ENCODE measurements at regions of chr6 and their contacts with region 1.

Region 1: GRCh38 chr6:32984605-32985389 is 16.4 kb downstream of the BRD2 start:
- DNase-seq: peak; percentile 96
- H3K4me3 ChIP-seq: no peak overlapping the region
- H3K27ac ChIP-seq: peak overlapping the region in 6 of 8 donors; percentile 17 to 65 (median 35)
- H3K4me1 ChIP-seq: peaks cover 0 to 54% (median 35%) of the 10 kb centered on the region in 6 donors
- H3K27me3 ChIP-seq: no peaks in the 10 kb centered on the region
- CTCF ChIP-seq: peak; percentile 63 to 95 (median 84)
- POLR2A ChIP-seq: no peak

Region 2: DNA sequence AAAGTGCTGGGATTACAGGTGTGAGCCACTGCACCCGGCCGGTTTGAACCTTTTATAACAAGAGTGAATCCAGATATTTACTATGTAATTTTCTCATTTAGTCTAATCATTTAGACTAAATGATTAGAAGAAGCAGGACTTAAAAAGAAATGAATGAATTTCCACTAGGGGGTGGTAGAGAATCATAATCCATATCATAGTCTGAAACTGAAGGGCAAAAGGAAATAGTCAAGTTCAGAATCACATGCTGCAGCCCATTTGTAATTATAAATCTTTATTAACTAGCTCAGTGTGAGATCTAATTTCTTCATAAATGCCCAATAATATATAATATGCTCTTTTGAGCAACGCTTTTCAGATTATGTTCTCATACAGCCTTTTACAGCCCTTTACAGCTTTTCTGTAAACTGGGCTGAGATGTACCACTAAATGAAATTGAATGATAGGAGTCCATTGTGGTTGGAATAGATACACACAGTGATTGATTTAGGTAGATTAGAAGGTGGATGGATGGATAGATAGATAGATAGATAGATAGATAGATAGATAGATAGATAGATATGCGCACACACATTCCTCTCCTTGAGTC is 99.0 kb before region 1 on chr6:
- intact Hi-C with region 1: loop called (anchors 2 kb)
- DNase-seq: no peak
- H3K4me3 ChIP-seq: no peak overlapping the region
- H3K27ac ChIP-seq: peak overlapping the region in 1 of 8 donors; percentile 28
- H3K4me1 ChIP-seq: peaks cover 0 to 29% (median 17%) of the 10 kb centered on the region in 6 donors
- H3K27me3 ChIP-seq: no peaks in the 10 kb centered on the region
- CTCF ChIP-seq: peak; percentile 39 to 81 (median 65)
- POLR2A ChIP-seq: no peak

Region 3: GRCh38 chr6:32933636-32934085 is 51.1 kb before region 1 on chr6:
- intact Hi-C with region 1: loop called (anchors 5 kb)
- DNase-seq: peak; percentile 86
- H3K4me3 ChIP-seq: no peak overlapping the region
- H3K27ac ChIP-seq: peak overlapping the region in 6 of 8 donors; percentile 36 to 96 (median 62)
- H3K4me1 ChIP-seq: peaks cover 17 to 93% (median 70%) of the 10 kb centered on the region in 6 donors
- H3K27me3 ChIP-seq: no peaks in the 10 kb centered on the region
- CTCF ChIP-seq: peak; percentile 49 to 86 (median 79)
- POLR2A ChIP-seq: no peak